ENCODE measurements at regions of chrX and their contacts with region 1.

Region 1: DNA sequence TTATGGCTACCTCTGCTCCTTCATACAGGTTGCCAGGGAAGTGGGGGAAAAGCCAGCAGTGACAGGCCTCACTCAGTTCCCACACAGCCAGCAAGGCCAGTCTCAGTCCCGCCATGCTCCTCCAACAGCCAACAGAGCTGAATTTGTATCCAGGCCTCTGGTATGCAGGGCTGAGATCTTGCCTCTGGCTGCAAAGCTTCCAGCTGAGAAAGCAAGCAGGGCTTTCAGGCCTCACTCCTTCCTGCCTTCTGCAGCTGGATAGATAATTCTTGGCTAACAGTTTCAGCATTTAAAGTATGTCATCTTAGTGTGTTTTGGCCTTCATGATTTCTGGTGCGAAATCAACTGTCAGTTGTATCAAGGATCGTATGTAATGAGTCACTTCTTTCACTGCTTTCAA is 103.6 kb downstream of the GNL3L start:
- H3K4me3 Mint-ChIP-seq: no peak overlapping the region
- H3K27ac Mint-ChIP-seq: no peak overlapping the region
- H3K4me1 Mint-ChIP-seq: no peaks in the 10 kb centered on the region
- H3K27me3 Mint-ChIP-seq: peaks cover 1% of the 10 kb centered on the region

Region 2: GRCh38 chrX:54597728-54598127 is 35.9 kb before region 1 on chrX:
- intact Hi-C with region 1: loop called (anchors 2 kb)
- H3K4me3 Mint-ChIP-seq: no peak overlapping the region
- H3K27ac Mint-ChIP-seq: no peak overlapping the region
- H3K4me1 Mint-ChIP-seq: no peaks in the 10 kb centered on the region
- H3K27me3 Mint-ChIP-seq: no peaks in the 10 kb centered on the region

Region 3: DNA sequence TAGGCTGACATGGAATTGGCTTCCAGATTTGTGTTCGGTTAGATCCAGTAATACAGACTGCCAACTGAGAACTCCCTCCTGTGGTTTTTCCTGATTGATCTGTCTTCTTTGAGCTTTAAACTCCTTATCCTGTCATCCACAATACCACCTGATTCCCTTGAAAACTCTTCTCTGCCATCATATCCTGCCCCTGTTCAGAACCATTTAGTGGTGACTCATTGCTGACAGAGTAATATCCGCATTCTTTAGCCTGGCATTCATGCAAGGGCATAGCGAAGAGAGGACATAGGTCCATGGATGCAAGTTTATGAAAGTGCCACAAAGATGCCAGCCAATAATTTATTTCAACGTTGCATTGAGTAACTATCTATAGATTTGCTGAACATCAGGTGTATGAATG is 87.8 kb after region 1 on chrX:
- intact Hi-C with region 1: no loop called
- H3K4me3 Mint-ChIP-seq: no peak overlapping the region
- H3K27ac Mint-ChIP-seq: no peak overlapping the region
- H3K4me1 Mint-ChIP-seq: no peaks in the 10 kb centered on the region
- H3K27me3 Mint-ChIP-seq: peaks cover 2% of the 10 kb centered on the region

Region 4: GRCh38 chrX:54776987-54777672 is 143.5 kb after region 1 on chrX:
- intact Hi-C with region 1: no loop called
- H3K4me3 Mint-ChIP-seq: no peak overlapping the region
- H3K27ac Mint-ChIP-seq: no peak overlapping the region
- H3K4me1 Mint-ChIP-seq: no peaks in the 10 kb centered on the region
- H3K27me3 Mint-ChIP-seq: no peaks in the 10 kb centered on the region

Measured in dendritic cell treated with granulocyte-macrophage colony-stimulating factor and Interleukin-4, amounts not matched to agents 40 ng/mL and 50 ng/mL, for 4 days (primary cell).